Natural killer cell (primary cell): ENCODE measurements at regions of chr17 and their contacts with region 1.

Region 1: DNA sequence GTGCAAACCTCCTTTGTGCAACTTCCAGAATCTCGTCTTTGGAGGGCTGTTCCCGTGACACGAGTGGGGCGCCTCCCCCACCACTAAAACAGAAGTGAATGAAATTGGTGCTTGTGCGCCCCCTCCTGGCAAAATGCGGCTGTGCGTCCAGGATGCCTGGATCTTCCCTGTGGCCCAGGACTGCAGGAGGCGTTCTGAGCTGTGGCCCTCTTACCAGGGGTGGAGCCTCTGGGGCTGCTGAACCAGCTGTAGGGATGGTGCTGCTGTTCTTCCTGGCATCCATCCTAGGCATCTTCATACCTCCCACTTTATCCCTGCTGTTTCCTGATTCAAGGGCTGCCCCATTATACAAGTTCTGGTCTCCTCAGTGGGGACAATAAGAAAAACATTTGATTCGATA is 18.5 kb upstream of the NAGLU start:
- DNase-seq: peak; percentile 82 to 88
- ATAC-seq: peak; percentile 81 to 95 (median 92)
- H3K4me3 ChIP-seq: no peak overlapping the region
- H3K4me3 Mint-ChIP-seq: no peak overlapping the region
- H3K27ac ChIP-seq: no peak overlapping the region
- H3K27ac Mint-ChIP-seq: no peak overlapping the region
- H3K4me1 ChIP-seq: peaks cover 6% of the 10 kb centered on the region
- H3K4me1 Mint-ChIP-seq: peaks cover 5 to 6% of the 10 kb centered on the region in 2 donors
- H3K27me3 ChIP-seq: no peaks in the 10 kb centered on the region
- H3K27me3 Mint-ChIP-seq: peaks cover 24 to 28% of the 10 kb centered on the region in 2 donors
- CTCF ChIP-seq: peak; percentile 96

Region 2: DNA sequence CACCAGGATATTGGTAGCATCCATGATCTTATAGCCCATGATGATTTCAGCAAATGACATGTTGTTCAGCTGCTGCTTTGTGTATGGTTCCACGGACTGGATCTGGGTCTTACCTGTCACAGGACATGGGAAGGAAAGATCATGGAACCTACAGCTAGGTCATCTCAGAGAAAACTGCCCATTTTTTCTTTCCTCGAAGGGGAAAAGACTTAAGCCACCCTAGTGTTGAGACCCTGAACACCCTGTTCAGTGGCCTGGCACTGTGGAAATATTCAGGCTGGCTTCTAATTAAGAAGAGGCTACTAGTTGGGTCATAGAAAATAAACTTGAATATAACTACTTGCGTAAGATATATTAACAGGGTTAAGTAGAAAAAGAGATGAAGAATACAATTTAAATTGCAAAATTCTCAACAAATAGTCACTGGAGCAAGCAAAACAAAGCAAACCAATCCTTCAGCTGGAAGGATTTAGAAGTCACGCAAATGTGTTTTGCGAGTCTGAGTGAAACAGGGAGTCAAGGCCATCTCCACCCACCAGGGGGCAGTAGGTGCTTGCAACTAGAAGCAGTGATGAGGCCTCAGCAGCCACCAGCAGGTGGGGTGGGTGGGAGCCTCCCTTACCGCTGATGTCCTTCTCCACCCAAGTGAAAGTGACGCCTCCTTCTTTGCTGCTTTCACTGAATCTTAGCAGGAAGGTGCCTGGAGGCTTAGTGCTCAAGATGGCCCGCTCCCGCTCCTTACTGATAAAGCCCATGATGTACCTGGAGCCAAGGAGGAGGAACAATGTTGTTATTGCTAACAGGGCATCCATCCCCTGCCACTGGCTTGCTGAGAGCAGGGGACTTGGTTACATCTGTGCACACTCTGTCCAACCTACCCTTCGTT is 194.9 kb before region 1 on chr17:
- intact Hi-C with region 1: loop called (anchors 2 kb)
- DNase-seq: peak; percentile 91 to 98
- ATAC-seq: peak; percentile 99
- H3K4me3 ChIP-seq: no peak overlapping the region
- H3K4me3 Mint-ChIP-seq: no peak overlapping the region
- H3K27ac ChIP-seq: no peak overlapping the region
- H3K27ac Mint-ChIP-seq: peak overlapping the region in 1 of 2 donors; percentile 31
- H3K4me1 ChIP-seq: peaks cover 14% of the 10 kb centered on the region
- H3K4me1 Mint-ChIP-seq: peaks cover 14 to 20% of the 10 kb centered on the region in 2 donors
- H3K27me3 ChIP-seq: no peaks in the 10 kb centered on the region
- H3K27me3 Mint-ChIP-seq: no peaks in the 10 kb centered on the region
- CTCF ChIP-seq: peak; percentile 100

Region 3: GRCh38 chr17:42428141-42428944 is 89.2 kb before region 1 on chr17:
- intact Hi-C with region 1: loop called (anchors 1 kb)
- DNase-seq: peak in 1 of 2 donors; percentile 77
- ATAC-seq: peak; percentile 66 to 80 (median 76)
- H3K4me3 ChIP-seq: no peak overlapping the region
- H3K4me3 Mint-ChIP-seq: no peak overlapping the region
- H3K27ac ChIP-seq: no peak overlapping the region
- H3K27ac Mint-ChIP-seq: no peak overlapping the region
- H3K4me1 ChIP-seq: peaks cover under 1% of the 10 kb centered on the region
- H3K4me1 Mint-ChIP-seq: peaks cover 0 to 4% of the 10 kb centered on the region in 2 donors
- H3K27me3 ChIP-seq: peaks cover 13% of the 10 kb centered on the region
- H3K27me3 Mint-ChIP-seq: peaks cover 21 to 27% of the 10 kb centered on the region in 2 donors
- CTCF ChIP-seq: peak; percentile 51

Region 4: GRCh38 chr17:42438600-42439567 is 78.6 kb before region 1 on chr17:
- intact Hi-C with region 1: loop called (anchors 1 kb)
- DNase-seq: peak; percentile 41 to 71
- ATAC-seq: peak in 1 of 3 donors; percentile 39
- H3K4me3 ChIP-seq: no peak overlapping the region
- H3K4me3 Mint-ChIP-seq: no peak overlapping the region
- H3K27ac ChIP-seq: no peak overlapping the region
- H3K27ac Mint-ChIP-seq: no peak overlapping the region
- H3K4me1 ChIP-seq: peaks cover 5% of the 10 kb centered on the region
- H3K4me1 Mint-ChIP-seq: peaks cover 3 to 11% of the 10 kb centered on the region in 2 donors
- H3K27me3 ChIP-seq: no peaks in the 10 kb centered on the region
- H3K27me3 Mint-ChIP-seq: peaks cover 7% of the 10 kb centered on the region in 2 donors
- CTCF ChIP-seq: peak; percentile 68

Region 5: GRCh38 chr17:42720996-42721583 is 203.6 kb after region 1 on chr17:
- intact Hi-C with region 1: no loop called
- DNase-seq: peak in 1 of 2 donors; percentile 81
- ATAC-seq: peak; percentile 80 to 84 (median 81)
- H3K4me3 ChIP-seq: no peak overlapping the region
- H3K4me3 Mint-ChIP-seq: no peak overlapping the region
- H3K27ac ChIP-seq: no peak overlapping the region
- H3K27ac Mint-ChIP-seq: no peak overlapping the region
- H3K4me1 ChIP-seq: no peaks in the 10 kb centered on the region
- H3K4me1 Mint-ChIP-seq: no peaks in the 10 kb centered on the region
- H3K27me3 ChIP-seq: no peaks in the 10 kb centered on the region
- H3K27me3 Mint-ChIP-seq: no peaks in the 10 kb centered on the region
- CTCF ChIP-seq: peak; percentile 65